Upper lobe of right lung (tissue), 1 donor: ENCODE measurements at regions of chr20 and their contacts with region 1.

Region 1: DNA sequence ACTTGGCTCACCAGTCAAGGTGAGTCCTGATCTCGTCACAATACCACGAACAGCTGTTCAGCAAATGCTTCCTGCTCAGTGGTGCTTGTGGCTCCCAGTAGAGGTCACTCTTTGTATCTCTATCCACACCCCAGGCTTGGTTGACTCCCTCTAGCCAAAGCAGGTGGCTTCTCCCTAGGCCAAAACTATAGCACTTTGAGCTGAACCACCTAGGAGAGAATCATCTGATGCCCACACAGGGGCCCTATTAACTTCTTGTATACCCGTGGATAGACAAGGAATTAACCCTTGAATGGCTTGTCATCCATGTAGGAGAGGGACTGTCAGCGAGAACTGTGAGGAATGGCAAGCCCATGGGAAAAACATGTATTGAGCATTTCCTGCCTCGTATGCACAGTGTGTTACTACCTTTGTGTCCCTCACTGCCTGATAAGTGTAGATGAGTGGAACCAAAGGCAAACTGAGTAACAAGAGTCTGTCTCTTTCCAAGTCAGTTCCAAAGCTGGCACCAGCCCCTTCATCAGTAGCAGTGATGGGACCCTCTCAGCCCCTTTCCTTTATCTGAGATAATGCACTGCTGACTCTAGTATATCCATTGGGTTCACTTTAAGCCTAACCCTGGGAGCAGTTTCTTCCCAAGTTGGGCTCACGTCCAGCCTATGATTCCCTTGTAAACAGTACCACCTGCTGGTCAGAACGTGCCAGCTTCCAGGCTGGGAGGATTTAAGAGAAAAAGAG is 42.5 kb downstream of the EIF2S2 start:
- DNase-seq: no peak
- ATAC-seq: peak; percentile 88
- H3K4me3 ChIP-seq: no peak overlapping the region
- H3K27ac ChIP-seq: no peak overlapping the region
- H3K4me1 ChIP-seq: peaks cover 24% of the 10 kb centered on the region
- H3K27me3 ChIP-seq: no peaks in the 10 kb centered on the region
- CTCF ChIP-seq: peak; percentile 88

Region 2: DNA sequence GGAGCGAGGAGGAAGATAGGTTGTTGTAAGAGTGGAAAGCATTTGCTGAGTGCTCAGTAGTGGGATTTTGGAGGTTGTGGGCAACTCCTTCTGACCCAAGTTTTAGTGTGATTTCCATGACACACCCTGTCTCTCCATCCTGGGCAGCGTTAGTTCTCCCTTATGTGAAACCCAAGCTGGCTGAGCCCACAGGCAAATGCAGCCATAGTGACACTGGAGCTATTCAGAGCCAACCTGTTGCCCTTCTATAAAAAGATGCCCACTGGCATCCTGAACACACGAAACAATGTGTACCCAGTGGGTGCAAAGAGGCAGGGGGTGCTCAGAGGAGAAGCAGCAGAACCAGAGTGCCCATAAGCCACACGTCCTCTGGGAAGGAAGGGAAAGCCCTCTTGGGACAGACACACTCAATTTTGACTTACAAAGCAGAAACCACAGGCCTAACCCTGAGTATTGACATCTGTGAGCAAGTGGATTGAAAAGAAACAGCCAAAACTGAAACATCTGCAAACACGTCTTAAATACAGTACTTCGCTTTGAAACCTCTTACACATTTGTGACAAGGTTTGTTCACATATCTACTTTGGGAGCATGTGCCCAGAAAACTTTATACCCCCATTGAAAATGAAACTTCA is 731.9 kb before region 1 on chr20:
- intact Hi-C with region 1: no loop called
- DNase-seq: no peak
- ATAC-seq: no peak
- H3K4me3 ChIP-seq: no peak overlapping the region
- H3K27ac ChIP-seq: no peak overlapping the region
- H3K4me1 ChIP-seq: no peaks in the 10 kb centered on the region
- H3K27me3 ChIP-seq: no peaks in the 10 kb centered on the region
- CTCF ChIP-seq: no peak

Region 3: GRCh38 chr20:33862709-33863403 is 206.7 kb before region 1 on chr20:
- intact Hi-C with region 1: loop called (anchors 5 kb)
- DNase-seq: peak; percentile 77
- ATAC-seq: peak; percentile 81
- H3K4me3 ChIP-seq: peak overlapping the region; percentile 19
- H3K27ac ChIP-seq: no peak overlapping the region
- H3K4me1 ChIP-seq: peaks cover 23% of the 10 kb centered on the region
- H3K27me3 ChIP-seq: no peaks in the 10 kb centered on the region
- CTCF ChIP-seq: peak; percentile 67

Region 4: GRCh38 chr20:33933469-33933909 is 136.0 kb before region 1 on chr20:
- intact Hi-C with region 1: loop called (anchors 10 kb)
- DNase-seq: peak; percentile 70
- ATAC-seq: peak; percentile 93
- H3K4me3 ChIP-seq: no peak overlapping the region
- H3K27ac ChIP-seq: peak overlapping the region; percentile 17
- H3K4me1 ChIP-seq: peaks cover 4% of the 10 kb centered on the region
- H3K27me3 ChIP-seq: no peaks in the 10 kb centered on the region
- CTCF ChIP-seq: peak; percentile 52

Region 5: DNA sequence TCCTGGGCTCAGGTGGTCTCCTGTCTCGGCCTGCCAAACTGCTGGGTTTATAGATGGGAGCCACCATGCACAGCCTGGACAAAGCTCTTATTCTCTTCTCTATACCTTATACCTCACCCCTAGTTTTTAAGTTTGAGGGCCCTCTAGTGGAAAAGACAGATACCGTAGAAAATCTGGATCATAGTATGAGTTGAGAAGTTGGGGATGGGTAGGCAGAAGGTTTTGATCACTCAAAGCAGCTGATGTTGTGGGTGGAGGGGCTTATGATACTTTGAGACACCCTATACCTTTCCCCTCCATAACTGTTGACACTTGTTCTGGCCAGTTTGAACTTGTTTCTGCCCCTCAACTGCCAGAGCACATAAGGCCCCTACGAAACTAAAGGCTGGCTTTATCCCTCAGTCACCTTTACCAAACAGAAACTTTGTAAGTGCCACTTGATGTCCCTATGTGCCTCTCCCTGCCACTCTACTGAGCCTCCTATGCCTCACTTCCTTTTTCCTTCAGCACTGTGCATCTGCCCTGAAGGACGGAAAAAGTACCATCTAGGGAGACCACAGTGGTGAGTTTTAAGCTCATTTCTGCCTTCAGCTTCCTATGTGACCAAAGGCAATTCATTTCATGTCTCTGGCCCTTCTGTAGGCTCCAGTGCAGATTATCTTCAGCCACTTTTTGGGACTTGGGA is 47.2 kb before region 1 on chr20:
- intact Hi-C with region 1: no loop called
- DNase-seq: no peak
- ATAC-seq: peak; percentile 79
- H3K4me3 ChIP-seq: no peak overlapping the region
- H3K27ac ChIP-seq: no peak overlapping the region
- H3K4me1 ChIP-seq: peaks cover 56% of the 10 kb centered on the region
- H3K27me3 ChIP-seq: no peaks in the 10 kb centered on the region
- CTCF ChIP-seq: peak; percentile 15